ENCODE measurements at regions of chr12 and their contacts with region 1.

Region 1: GRCh38 chr12:96478011-96478410 is 11.4 kb upstream of the CFAP54 start:
- DNase-seq: no peak
- ATAC-seq: no peak
- H3K4me3 Mint-ChIP-seq: no peak overlapping the region
- H3K27ac Mint-ChIP-seq: no peak overlapping the region
- H3K4me1 Mint-ChIP-seq: no peaks in the 10 kb centered on the region
- H3K27me3 Mint-ChIP-seq: peaks cover 2% of the 10 kb centered on the region
- CTCF ChIP-seq: no peak

Region 2: DNA sequence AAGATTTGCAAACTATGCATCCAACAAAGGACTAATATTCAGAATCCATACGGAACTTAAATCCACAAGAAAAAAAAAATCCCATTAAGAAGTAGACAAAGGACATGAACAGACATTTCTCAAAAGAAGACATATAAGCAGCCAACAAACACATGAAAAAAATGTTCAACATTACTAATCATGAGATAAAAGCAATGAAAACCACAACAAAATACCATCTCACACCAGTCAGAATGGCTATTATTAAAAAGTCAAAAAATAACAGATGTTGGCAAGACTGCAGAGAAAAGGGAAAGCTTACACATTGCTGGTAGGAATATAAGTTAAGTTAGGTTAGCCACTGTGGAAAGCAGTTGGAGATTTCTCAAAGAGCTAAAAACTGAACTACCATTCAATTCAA is 94.0 kb before region 1 on chr12:
- CTCF ChIA-PET with region 1: no interaction called
- POLR2A ChIA-PET with region 1: no interaction called
- intact Hi-C with region 1: no loop called
- DNase-seq: no peak
- ATAC-seq: no peak
- H3K4me3 Mint-ChIP-seq: no peak overlapping the region
- H3K27ac Mint-ChIP-seq: no peak overlapping the region
- H3K4me1 Mint-ChIP-seq: peaks cover 62% of the 10 kb centered on the region
- H3K27me3 Mint-ChIP-seq: no peaks in the 10 kb centered on the region
- CTCF ChIP-seq: no peak

Region 3: GRCh38 chr12:96445691-96446583 is 32.1 kb before region 1 on chr12:
- CTCF ChIA-PET with region 1: no interaction called
- POLR2A ChIA-PET with region 1: no interaction called
- intact Hi-C with region 1: no loop called
- DNase-seq: no peak
- ATAC-seq: peak; percentile 98
- H3K4me3 Mint-ChIP-seq: peak overlapping the region; percentile 5
- H3K27ac Mint-ChIP-seq: peak overlapping the region; percentile 79
- H3K4me1 Mint-ChIP-seq: peaks cover 16% of the 10 kb centered on the region
- H3K27me3 Mint-ChIP-seq: no peaks in the 10 kb centered on the region
- CTCF ChIP-seq: no peak

Region 4: GRCh38 chr12:96462571-96463280 is 15.3 kb before region 1 on chr12:
- CTCF ChIA-PET with region 1: no interaction called
- POLR2A ChIA-PET with region 1: no interaction called
- intact Hi-C with region 1: loop called (anchors 1 kb)
- DNase-seq: no peak
- ATAC-seq: no peak
- H3K4me3 Mint-ChIP-seq: no peak overlapping the region
- H3K27ac Mint-ChIP-seq: no peak overlapping the region
- H3K4me1 Mint-ChIP-seq: peaks cover 5% of the 10 kb centered on the region
- H3K27me3 Mint-ChIP-seq: no peaks in the 10 kb centered on the region
- CTCF ChIP-seq: no peak